ENCODE measurements at regions of chr6 and their contacts with region 1.

Region 1: GRCh38 chr6:30717042-30717844 is at the start of gene MDC1:
- DNase-seq: peak; percentile 99
- H3K4me3 Mint-ChIP-seq: peak within 1 kb of the TSS; percentile 95
- H3K27ac Mint-ChIP-seq: peak within 1 kb of the TSS; percentile 95
- H3K4me1 Mint-ChIP-seq: peaks cover 38% of the 10 kb centered on the region
- H3K27me3 Mint-ChIP-seq: no peaks in the 10 kb centered on the region
- CTCF ChIP-seq: no peak
- total RNA-seq, gene MDC1: 62.4 and 66.6 TPM in 2 replicates

Region 2: GRCh38 chr6:30541515-30542403 is 175.5 kb before region 1 on chr6:
- CTCF ChIA-PET with region 1: no interaction called
- intact Hi-C with region 1: loop called (anchors 10 kb)
- DNase-seq: peak; percentile 80
- H3K4me3 Mint-ChIP-seq: peak overlapping the region; percentile 27
- H3K27ac Mint-ChIP-seq: peak overlapping the region; percentile 6
- H3K4me1 Mint-ChIP-seq: peaks cover 18% of the 10 kb centered on the region
- H3K27me3 Mint-ChIP-seq: no peaks in the 10 kb centered on the region
- CTCF ChIP-seq: peak; percentile 96

Region 3: DNA sequence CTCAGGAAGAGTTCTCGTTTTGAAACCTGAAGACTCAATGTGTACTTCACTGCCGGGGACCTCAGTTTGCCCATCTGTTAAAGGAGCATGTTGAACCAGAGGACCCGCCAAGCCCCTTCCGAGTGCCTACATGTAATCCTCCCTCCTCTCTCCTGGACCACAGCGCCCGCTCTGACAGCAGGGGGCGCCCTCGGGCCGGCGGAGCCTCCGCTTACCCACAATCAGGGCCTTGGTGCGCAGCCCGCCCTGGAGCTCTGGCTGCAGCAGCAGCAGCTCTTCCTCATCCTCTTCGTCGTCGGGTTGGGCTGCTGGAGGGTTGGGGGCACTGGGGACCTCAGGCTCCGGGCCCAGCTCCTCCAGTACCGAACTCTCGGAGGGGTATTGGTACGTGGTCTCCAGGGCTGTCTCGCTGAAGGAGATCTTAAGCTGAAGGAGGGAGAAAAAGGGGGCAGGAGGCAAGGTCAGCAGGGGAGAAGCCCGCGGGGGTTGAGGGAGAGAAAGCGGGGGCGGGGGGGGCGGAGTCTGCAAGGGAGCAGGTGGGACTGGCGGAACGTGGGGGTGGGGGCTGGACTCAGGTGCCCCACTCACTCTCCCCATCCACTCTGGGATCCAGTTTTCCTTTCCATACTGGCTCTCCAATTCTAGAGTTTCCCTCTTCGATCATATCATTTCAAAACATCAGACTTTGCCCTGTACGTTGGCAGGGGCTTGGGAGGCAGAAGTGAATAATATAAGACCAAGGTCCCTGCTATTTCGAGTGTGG is 38.1 kb before region 1 on chr6:
- CTCF ChIA-PET with region 1: interaction called, 72 read pairs
- intact Hi-C with region 1: loop called (anchors 1 kb)
- DNase-seq: peak; percentile 96
- H3K4me3 Mint-ChIP-seq: peak overlapping the region; percentile 40
- H3K27ac Mint-ChIP-seq: peak overlapping the region; percentile 33
- H3K4me1 Mint-ChIP-seq: peaks cover 49% of the 10 kb centered on the region
- H3K27me3 Mint-ChIP-seq: no peaks in the 10 kb centered on the region
- CTCF ChIP-seq: peak; percentile 96

Region 4: GRCh38 chr6:30696432-30696831 is 20.8 kb before region 1 on chr6:
- CTCF ChIA-PET with region 1: interaction called, 14 read pairs
- intact Hi-C with region 1: loop called (anchors 1 kb)
- DNase-seq: no peak
- H3K4me3 Mint-ChIP-seq: no peak overlapping the region
- H3K27ac Mint-ChIP-seq: no peak overlapping the region
- H3K4me1 Mint-ChIP-seq: peaks cover 21% of the 10 kb centered on the region
- H3K27me3 Mint-ChIP-seq: no peaks in the 10 kb centered on the region
- CTCF ChIP-seq: no peak

Measured in Calu3 (cell line).